ENCODE measurements at regions of chr21 and their contacts with region 1.

Region 1: GRCh38 chr21:44011980-44012527 is at the start of gene TRAPPC10:
- DNase-seq: peak; percentile 84
- H3K4me3 Mint-ChIP-seq: peak within 1 kb of the TSS; percentile 85
- H3K27ac Mint-ChIP-seq: peak within 1 kb of the TSS; percentile 90
- H3K4me1 Mint-ChIP-seq: peaks cover 44% of the 10 kb centered on the region
- H3K27me3 Mint-ChIP-seq: no peaks in the 10 kb centered on the region
- total RNA-seq, gene TRAPPC10: 37.1 to 38.6 TPM

Region 2: GRCh38 chr21:43938751-43939442 is 73.2 kb before region 1 on chr21:
- CTCF ChIA-PET with region 1: no interaction called
- intact Hi-C with region 1: no loop called
- DNase-seq: peak; percentile 95
- H3K4me3 Mint-ChIP-seq: peak overlapping the region; percentile 80
- H3K27ac Mint-ChIP-seq: peak overlapping the region; percentile 67
- H3K4me1 Mint-ChIP-seq: peaks cover 15% of the 10 kb centered on the region
- H3K27me3 Mint-ChIP-seq: no peaks in the 10 kb centered on the region

Region 3: DNA sequence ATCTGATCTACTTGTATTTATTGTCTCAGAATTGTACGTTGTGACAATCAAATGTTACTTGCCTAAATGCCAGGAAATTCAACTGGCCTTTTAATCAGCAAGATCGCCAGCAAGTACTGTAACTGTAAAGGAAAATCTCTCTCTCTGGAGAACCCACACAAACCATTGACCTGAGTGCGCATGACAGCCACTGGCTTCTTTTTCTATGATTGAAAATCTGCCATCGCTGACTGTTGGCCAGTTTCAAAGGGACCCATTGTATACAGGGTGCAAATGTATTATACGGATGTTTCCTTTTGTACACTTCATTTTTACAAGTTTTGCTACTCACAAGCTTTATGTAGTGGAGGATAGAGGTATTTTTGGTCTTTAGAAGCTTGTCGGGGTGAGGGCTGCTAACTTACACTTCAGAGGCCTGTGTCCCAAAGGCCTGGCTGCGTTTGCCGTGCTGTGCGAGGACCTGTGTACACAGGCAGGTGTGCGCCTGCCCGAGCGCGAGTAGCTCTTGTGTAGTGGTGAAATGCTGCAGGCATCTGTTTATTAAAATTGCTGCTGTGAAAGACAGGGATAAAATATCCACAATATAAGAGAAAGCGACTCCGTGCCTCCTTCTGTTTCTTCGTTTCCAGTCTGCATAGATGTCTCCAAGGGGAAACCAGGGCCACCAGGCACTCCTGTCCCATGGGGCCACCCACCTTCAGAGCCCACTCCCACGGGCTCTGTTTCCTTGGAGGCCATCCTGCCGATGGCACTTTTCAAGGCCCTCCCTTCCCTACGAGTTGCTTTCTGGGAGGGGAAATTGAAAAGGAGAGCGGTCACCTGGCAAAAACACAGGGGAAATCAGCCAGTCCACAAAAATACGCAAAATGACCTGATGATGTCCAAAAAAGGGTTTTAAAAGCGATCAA is 25.3 kb before region 1 on chr21:
- CTCF ChIA-PET with region 1: no interaction called
- intact Hi-C with region 1: no loop called
- DNase-seq: no peak
- H3K4me3 Mint-ChIP-seq: no peak overlapping the region
- H3K27ac Mint-ChIP-seq: no peak overlapping the region
- H3K4me1 Mint-ChIP-seq: peaks cover 16% of the 10 kb centered on the region
- H3K27me3 Mint-ChIP-seq: no peaks in the 10 kb centered on the region

Region 4: GRCh38 chr21:44024887-44025362 is 12.9 kb after region 1 on chr21:
- CTCF ChIA-PET with region 1: interaction called, 5 read pairs
- intact Hi-C with region 1: loop called (anchors 1 kb)
- DNase-seq: peak; percentile 35
- H3K4me3 Mint-ChIP-seq: no peak overlapping the region
- H3K27ac Mint-ChIP-seq: peak overlapping the region; percentile 81
- H3K4me1 Mint-ChIP-seq: peaks cover 81% of the 10 kb centered on the region
- H3K27me3 Mint-ChIP-seq: no peaks in the 10 kb centered on the region

Region 5: DNA sequence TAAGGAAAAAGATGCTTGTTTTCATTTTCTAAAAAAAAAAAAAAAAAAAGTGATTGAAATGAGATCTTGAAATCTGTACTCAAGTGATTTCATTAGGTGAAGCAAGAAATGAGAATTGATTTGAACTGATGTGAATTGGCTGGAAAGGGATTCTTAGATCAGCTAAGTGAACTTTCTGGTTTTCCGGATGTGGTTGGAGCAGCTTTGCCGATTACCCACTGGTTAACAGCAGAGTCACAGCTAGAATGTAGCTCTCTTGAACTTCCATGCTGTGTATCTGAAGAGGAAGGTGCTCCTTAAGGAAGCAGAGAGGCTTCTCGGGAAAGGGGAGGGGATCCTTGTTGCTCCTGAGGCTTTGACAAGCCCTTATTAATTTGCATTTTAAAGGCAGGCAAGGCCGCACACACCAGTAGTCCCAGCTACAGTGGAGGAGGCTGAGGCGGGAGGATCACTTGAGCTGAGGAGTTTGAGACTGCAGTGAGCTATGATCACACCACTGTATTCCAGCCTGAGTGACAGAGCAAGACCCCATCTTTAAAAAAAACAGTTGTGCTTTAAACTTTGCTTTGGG is 66.4 kb after region 1 on chr21:
- CTCF ChIA-PET with region 1: interaction called, 14 read pairs
- intact Hi-C with region 1: loop called (anchors 2 kb)
- DNase-seq: no peak
- H3K4me3 Mint-ChIP-seq: no peak overlapping the region
- H3K27ac Mint-ChIP-seq: peak overlapping the region; percentile 83
- H3K4me1 Mint-ChIP-seq: peaks cover 50% of the 10 kb centered on the region
- H3K27me3 Mint-ChIP-seq: no peaks in the 10 kb centered on the region

Region 6: GRCh38 chr21:44089001-44089911 is 77.2 kb after region 1 on chr21:
- CTCF ChIA-PET with region 1: interaction called, 14 read pairs
- intact Hi-C with region 1: loop called (anchors 1 kb)
- DNase-seq: peak; percentile 59
- H3K4me3 Mint-ChIP-seq: peak overlapping the region; percentile 22
- H3K27ac Mint-ChIP-seq: peak overlapping the region; percentile 97
- H3K4me1 Mint-ChIP-seq: peaks cover 63% of the 10 kb centered on the region
- H3K27me3 Mint-ChIP-seq: no peaks in the 10 kb centered on the region

Region 7: DNA sequence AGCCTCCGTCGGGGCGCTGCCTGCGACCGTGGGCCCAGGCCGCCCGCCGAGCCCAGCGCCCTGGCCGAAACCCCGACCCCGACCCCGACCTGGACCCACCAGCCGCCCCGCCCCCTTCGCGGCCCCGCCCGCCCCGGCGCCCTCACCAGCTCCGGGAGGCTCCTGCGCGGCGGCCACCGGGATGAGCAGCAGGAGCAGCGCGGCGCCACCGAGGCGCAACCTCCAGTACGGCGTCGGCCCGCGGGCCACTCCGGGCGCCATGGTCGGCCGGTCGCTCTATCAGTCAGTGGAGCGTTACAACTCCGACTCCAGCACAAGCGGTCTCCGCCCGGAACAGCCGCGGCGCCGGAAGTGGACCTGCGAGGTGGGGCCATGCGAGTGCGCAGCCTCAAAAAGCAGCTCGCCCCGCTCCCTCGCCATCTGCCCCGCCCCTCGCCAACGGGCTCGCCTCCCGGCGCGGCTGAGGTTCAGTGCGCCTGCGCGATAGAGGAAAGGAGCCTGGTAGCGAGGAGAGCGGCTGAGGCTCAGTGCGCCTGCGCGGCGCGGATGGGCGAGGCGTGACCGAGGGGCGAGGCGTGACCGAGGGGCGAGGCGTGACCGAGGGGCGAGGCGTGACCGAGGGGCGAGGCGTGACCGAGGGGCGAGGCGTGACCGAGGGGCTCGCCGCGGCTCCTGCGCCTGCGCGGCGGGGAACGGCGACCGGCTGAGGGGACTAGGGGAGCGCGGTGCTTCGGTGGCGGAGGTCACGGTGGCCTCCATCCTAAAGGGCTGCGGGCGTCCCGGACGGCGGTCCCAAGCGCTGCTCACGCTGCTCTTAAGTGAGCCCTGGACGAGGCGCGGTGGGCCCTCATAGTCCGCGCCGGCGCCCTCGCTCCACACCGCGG is 861.5 kb after region 1 on chr21 and contains the start of gene PTTG1IP:
- CTCF ChIA-PET with region 1: no interaction called
- intact Hi-C with region 1: loop called (anchors 5 kb)
- DNase-seq: peak; percentile 99
- H3K4me3 Mint-ChIP-seq: peak within 1 kb of the TSS; percentile 91
- H3K27ac Mint-ChIP-seq: peak within 1 kb of the TSS; percentile 82
- H3K4me1 Mint-ChIP-seq: peaks cover 43% of the 10 kb centered on the region
- H3K27me3 Mint-ChIP-seq: no peaks in the 10 kb centered on the region
- total RNA-seq, gene PTTG1IP: 37.6 to 38.5 TPM